ENCODE measurements at regions of chr20 and their contacts with region 1.

Region 1: GRCh38 chr20:54649511-54649962 is 174.1 kb downstream of the DOK5 start:
- DNase-seq: peak; percentile 65 to 81
- ATAC-seq: peak; percentile 61 to 86 (median 73)
- H3K4me3 ChIP-seq: no peak overlapping the region
- H3K27ac ChIP-seq: no peak overlapping the region
- H3K4me1 ChIP-seq: peaks cover 0 to 12% (median 0%) of the 10 kb centered on the region in 9 donors
- H3K27me3 ChIP-seq: no peaks in the 10 kb centered on the region
- CTCF ChIP-seq: peak; percentile 49 to 84 (median 78)

Region 2: DNA sequence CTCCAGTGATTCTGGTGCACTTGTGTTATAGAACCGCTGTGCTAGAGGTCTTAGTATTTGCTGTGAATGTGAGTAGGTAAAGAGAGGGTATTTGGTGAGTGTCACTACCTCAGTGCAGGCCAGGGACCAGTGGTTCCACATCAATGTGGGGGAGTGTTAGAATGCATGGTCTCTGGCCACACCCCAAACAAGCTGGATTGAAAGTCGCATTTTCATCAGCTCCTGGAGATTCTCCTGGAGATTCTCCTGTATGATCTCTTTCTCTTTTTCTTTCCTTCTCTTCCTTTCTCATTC is 552.4 kb before region 1 on chr20:
- intact Hi-C with region 1: loop called (anchors 2 to 5 kb)
- DNase-seq: no peak
- ATAC-seq: no peak
- H3K4me3 ChIP-seq: no peak overlapping the region
- H3K27ac ChIP-seq: no peak overlapping the region
- H3K4me1 ChIP-seq: no peaks in the 10 kb centered on the region
- H3K27me3 ChIP-seq: peaks cover 0 to 30% (median 8%) of the 10 kb centered on the region in 7 donors
- CTCF ChIP-seq: no peak

Region 3: GRCh38 chr20:54103067-54103761 is 546.3 kb before region 1 on chr20:
- intact Hi-C with region 1: loop called in 9 of 10 experiments (anchors 5 kb)
- DNase-seq: peak; percentile 55 to 68
- ATAC-seq: peak in 4 of 8 donors; percentile 51 to 59 (median 52)
- H3K4me3 ChIP-seq: no peak overlapping the region
- H3K27ac ChIP-seq: no peak overlapping the region
- H3K4me1 ChIP-seq: peaks cover 0 to 3% (median 0%) of the 10 kb centered on the region in 9 donors
- H3K27me3 ChIP-seq: peaks cover 0 to 21% (median 0%) of the 10 kb centered on the region in 7 donors
- CTCF ChIP-seq: peak; percentile 34 to 89 (median 76)

Region 4: GRCh38 chr20:54207743-54208547 is 441.6 kb before region 1 on chr20 and contains the start of gene PFDN4:
- intact Hi-C with region 1: loop called in 1 of 10 experiments (anchors 5 kb)
- DNase-seq: peak; percentile 82 to 85
- ATAC-seq: peak; percentile 96 to 98 (median 97)
- H3K4me3 ChIP-seq: peak within 1 kb of the TSS; percentile 76 to 99 (median 91)
- H3K27ac ChIP-seq: peak within 1 kb of the TSS; percentile 94 to 100 (median 99)
- H3K4me1 ChIP-seq: peaks cover 0 to 33% (median 23%) of the 10 kb centered on the region in 9 donors
- H3K27me3 ChIP-seq: no peaks in the 10 kb centered on the region
- CTCF ChIP-seq: peak; percentile 74 to 97 (median 89)
- total RNA-seq, gene PFDN4: 21.9 to 37.0 (median 28.2) TPM

Region 5: GRCh38 chr20:54219751-54220426 is 429.6 kb before region 1 on chr20:
- intact Hi-C with region 1: loop called (anchors 2 to 5 kb)
- DNase-seq: no peak
- ATAC-seq: no peak
- H3K4me3 ChIP-seq: no peak overlapping the region
- H3K27ac ChIP-seq: no peak overlapping the region
- H3K4me1 ChIP-seq: peaks cover 0 to 43% (median 22%) of the 10 kb centered on the region in 9 donors
- H3K27me3 ChIP-seq: no peaks in the 10 kb centered on the region
- CTCF ChIP-seq: peak; percentile 29 to 74 (median 59)

Region 6: DNA sequence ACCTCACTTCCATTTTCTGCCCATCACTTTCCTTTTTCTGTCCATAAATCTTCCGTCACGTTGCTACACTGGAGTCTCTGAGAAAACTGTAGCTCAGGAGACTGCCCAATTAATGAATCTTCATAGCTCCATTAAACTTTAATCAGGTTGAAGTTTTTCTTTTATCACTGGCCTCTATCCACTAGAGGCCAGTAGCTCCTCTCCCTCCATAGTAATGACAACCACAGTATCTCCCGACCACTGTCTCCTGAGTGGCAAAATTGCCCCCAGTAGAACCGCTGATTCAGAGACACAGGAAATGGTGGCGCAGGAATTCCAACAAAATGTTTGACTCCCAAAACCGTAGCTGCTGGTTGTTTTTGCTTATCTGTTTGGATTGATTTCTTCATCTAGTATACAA is 192.6 kb before region 1 on chr20:
- intact Hi-C with region 1: loop called in 1 of 10 experiments (anchors 10 kb)
- DNase-seq: no peak
- ATAC-seq: no peak
- H3K4me3 ChIP-seq: no peak overlapping the region
- H3K27ac ChIP-seq: no peak overlapping the region
- H3K4me1 ChIP-seq: no peaks in the 10 kb centered on the region
- H3K27me3 ChIP-seq: no peaks in the 10 kb centered on the region
- CTCF ChIP-seq: peak in 5 of 9 donors; percentile 12 to 40 (median 23)

Region 7: GRCh38 chr20:54475334-54476168 is 174.0 kb before region 1 on chr20 and contains the start of gene DOK5:
- intact Hi-C with region 1: loop called in 1 of 10 experiments (anchors 10 kb)
- DNase-seq: peak; percentile 52 to 60
- ATAC-seq: peak; percentile 85 to 91 (median 89)
- H3K4me3 ChIP-seq: peak within 1 kb of the TSS; percentile 46 to 85 (median 67)
- H3K27ac ChIP-seq: peak within 1 kb of the TSS in 8 of 10 donors; percentile 35 to 82 (median 60)
- H3K4me1 ChIP-seq: peaks cover 0 to 30% (median 6%) of the 10 kb centered on the region in 9 donors
- H3K27me3 ChIP-seq: peaks cover 0 to 60% (median 4%) of the 10 kb centered on the region in 7 donors
- CTCF ChIP-seq: peak in 1 of 9 donors; percentile 15
- total RNA-seq, gene DOK5: 0.51 to 21.1 (median 9.6) TPM

Region 8: DNA sequence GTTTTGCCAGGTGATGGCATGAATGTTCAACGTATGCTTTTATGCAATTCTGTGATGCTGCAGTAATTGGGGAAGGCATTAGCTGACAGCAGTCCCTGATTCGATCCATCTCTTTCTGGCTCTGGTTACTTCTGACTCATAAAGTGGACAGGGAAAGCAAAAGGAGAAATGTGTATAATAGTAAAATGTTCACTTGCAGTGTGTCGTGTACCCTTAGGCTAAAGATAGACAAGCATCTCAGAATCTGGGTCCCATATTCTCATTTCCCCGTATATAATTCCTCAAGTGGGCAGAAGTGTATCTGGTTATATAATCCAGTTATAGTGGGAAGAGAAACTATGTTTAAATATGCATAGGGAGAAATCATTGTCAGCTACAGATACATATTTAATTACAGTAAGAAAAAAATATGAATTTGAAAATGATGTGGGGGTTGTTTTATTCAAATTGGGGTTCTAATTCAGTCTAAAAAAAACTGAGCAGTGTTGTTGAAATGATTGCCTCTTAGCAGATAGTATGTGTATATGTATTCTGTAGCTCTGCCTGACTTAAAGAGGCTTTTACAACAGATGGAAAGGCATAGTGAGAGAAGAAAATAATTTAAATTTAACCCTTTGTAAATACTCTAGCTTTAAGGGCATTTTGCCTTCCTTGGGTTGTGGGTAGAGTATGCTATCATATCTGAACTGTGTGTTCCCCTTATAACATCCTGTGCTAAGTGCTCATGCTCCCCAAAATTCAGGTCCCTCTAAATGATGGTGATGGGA is 133.5 kb before region 1 on chr20:
- intact Hi-C with region 1: no loop called
- DNase-seq: no peak
- ATAC-seq: no peak
- H3K4me3 ChIP-seq: no peak overlapping the region
- H3K27ac ChIP-seq: no peak overlapping the region
- H3K4me1 ChIP-seq: peaks cover 0 to 3% (median 0%) of the 10 kb centered on the region in 9 donors
- H3K27me3 ChIP-seq: no peaks in the 10 kb centered on the region
- CTCF ChIP-seq: no peak